Calu3 (cell line): ENCODE measurements at regions of chr1 and their contacts with region 1.

Region 1: DNA sequence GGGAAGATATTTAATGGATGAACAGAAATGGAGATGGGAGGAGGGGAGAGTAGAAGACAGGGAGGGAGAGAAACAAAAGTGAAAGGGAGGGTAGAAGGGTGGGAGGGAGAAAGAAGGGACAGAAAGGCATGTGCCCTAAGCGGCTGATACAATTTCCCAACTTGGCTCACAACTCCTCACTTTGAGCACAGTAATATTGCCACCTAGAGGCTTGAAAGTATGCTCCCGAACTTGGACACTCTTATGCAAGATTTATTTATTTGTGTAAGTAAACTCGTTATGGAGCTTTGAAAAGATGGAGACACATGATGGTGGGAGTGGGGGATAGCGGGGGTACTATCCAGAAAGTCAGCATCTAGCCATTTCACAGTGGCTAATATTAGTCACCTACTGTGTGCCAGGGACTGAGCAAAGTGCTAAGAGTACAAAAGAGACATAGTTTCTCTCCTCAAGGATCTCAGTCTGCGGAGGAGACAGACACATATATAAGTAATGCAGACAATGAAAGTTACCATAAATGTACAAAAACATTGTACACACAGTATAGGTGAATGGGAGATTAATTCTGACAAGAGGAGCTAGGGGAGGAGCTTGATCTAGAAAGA is 189.7 kb downstream of the SEC16B start:
- DNase-seq: peak; percentile 23
- H3K4me3 Mint-ChIP-seq: no peak overlapping the region
- H3K27ac Mint-ChIP-seq: no peak overlapping the region
- H3K4me1 Mint-ChIP-seq: no peaks in the 10 kb centered on the region
- H3K27me3 Mint-ChIP-seq: peaks cover 64% of the 10 kb centered on the region
- CTCF ChIP-seq: peak; percentile 52

Region 2: DNA sequence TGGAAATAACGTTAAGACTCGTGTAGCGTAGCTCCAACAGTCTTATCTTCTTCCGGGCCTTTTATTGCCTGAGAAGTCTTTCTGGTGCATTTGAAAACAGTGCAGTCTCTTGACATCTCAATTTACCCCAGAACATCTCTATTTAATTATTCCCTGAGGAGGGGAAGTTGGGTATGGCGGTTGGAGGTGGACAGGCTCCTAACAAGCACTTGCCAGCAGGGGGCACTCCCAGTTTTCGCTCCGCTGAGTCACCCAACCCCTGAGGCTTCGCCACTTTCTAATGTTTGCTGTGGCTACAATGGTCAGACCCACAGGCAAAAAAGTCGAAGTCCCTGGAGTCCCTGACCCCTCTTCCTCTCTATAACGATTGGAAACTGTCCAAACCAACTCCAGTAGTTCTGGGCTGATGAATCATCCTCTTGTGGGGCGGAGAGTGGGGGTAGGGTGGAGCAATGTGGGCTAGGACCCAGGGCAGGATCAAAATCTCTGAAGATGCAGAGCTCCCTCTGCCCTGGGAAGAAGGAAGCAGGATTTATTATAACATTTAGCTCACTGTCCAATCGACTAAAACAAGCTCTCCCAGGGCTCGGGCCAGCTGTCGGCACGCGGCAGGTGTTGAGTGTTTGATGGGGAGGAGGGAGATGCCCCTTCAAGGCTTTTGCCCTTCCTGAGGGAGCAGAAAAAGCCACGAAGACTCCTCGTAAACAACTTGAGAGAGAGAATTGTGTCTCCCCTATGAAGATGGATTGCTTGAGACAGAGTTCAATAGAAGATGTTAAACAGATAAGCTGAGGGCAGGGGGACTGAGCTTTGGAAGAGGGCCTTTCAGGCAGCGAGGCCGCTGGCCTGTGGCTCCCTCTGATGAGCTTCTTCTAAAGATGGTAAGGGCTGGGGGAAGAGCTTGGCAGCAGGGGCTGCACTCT is 523.8 kb before region 1 on chr1:
- CTCF ChIA-PET with region 1: interaction called, 4 read pairs
- intact Hi-C with region 1: loop called (anchors 2 kb)
- DNase-seq: peak; percentile 92
- H3K4me3 Mint-ChIP-seq: peak overlapping the region; percentile 28
- H3K27ac Mint-ChIP-seq: peak overlapping the region; percentile 45
- H3K4me1 Mint-ChIP-seq: peaks cover 34% of the 10 kb centered on the region
- H3K27me3 Mint-ChIP-seq: no peaks in the 10 kb centered on the region
- CTCF ChIP-seq: peak; percentile 92

Region 3: DNA sequence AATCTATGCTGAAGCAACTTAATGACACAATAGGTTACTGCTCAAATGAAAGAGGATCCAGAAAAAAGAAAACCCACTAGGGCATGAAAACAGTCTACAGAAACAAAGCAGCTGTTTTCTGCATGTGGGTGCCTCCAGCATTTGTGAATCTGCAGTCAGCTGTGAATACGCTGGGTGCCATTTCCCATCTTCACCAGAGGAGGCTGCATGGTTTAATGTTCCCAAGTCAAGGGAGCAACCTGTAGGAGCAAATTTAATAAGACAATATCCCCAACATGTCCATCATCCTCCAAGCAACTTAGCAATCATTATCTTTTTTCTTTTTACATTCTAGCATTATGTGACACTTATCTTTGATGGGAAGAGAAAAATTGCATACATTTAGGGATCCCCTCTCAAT is 212.8 kb before region 1 on chr1:
- CTCF ChIA-PET with region 1: no interaction called
- intact Hi-C with region 1: loop called (anchors 2 kb)
- DNase-seq: peak; percentile 35
- H3K4me3 Mint-ChIP-seq: no peak overlapping the region
- H3K27ac Mint-ChIP-seq: no peak overlapping the region
- H3K4me1 Mint-ChIP-seq: no peaks in the 10 kb centered on the region
- H3K27me3 Mint-ChIP-seq: peaks cover 27% of the 10 kb centered on the region
- CTCF ChIP-seq: peak; percentile 25